ENCODE measurements at regions of chr7 and their contacts with region 1.

Region 1: DNA sequence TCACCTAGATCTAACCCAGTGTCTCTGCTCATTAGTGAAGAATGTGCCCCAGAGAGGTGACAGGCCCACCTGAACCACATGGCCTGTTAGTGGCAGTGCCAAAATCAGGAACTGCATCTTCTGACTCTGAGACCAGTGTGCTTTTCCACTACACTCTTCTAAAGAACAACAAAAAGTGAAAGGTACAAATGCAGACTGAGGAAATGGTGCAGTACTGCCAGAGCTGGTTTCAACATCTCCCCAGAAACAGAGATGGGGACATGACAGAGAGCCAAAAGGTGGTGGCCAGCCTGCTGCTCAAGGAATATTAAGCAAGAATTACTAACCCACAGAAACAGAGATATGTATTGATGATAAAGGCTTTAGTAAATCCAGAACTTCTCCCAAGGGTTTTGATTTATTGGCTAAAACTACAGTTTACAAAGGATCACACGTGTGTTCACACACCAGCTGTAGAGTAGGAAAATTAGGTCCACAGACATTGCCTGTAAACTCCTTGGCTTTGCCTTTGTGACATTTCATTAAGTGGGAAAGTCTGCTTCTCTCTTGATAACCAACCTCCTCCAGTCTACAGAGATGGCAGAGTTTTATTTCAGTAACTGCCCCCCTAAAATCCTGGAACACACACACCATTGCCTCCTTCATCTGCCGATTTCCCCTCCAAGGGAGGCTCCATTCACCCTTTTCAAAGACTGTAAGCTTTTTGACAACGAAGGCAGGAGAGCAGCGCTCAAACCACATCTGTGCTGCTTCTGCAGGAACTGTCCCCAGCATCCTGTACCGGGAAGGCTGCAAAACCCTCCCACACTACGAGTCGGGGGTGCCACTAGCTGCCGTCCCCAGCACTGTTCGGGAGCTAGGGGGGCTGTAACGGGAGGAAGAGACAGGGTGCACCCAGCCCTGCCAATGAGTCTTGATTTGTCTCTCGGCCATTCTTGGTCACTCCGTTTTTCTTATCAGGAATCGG is 29.8 kb downstream of the GSDME start:
- DNase-seq: no peak
- H3K4me3 Mint-ChIP-seq: peak overlapping the region; percentile 44
- H3K27ac Mint-ChIP-seq: peak overlapping the region; percentile 74
- H3K4me1 Mint-ChIP-seq: peaks cover 34% of the 10 kb centered on the region
- H3K27me3 Mint-ChIP-seq: peaks cover 11% of the 10 kb centered on the region

Region 2: DNA sequence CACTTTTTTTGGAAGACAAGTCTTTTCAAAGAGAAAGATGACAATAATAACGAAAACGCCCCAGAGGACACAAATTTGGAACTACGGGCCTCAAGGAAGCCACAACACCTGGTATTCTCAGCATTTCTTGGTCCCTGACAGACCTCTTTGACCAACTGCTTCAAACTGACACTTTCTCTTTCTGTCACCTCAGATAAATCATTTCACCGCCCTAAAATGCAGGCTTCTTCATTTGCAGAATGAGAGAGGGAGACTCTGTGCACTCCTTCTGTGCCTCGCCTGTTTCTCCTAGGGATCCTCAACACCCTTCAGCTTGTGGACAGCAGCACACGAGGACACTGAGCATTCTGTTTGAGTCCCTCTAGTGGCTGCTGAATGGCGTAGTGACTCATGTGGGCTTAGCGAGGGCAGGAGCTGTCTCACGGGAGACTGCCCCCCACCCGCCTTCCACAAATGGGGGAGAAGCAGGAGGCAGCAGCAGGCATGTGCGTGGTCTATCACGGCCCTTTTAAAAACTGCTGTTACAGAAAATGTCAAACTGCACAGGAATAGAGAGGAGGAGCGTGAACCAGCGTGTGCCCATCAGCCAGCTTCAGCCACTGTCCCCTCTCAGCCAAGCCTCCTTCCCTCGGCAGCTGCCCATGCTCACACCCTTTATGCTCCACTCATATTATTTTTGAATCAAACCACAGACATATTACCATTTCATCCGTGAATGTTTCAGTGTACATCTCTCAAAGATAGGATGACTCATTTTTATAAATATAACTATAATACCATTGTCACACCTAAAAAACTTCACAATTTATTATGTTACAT is 11.6 kb before region 1 on chr7:
- intact Hi-C with region 1: no loop called
- DNase-seq: no peak
- H3K4me3 Mint-ChIP-seq: no peak overlapping the region
- H3K27ac Mint-ChIP-seq: no peak overlapping the region
- H3K4me1 Mint-ChIP-seq: peaks cover 13% of the 10 kb centered on the region
- H3K27me3 Mint-ChIP-seq: peaks cover 2% of the 10 kb centered on the region

Region 3: GRCh38 chr7:24764972-24765744 is 37.7 kb after region 1 on chr7:
- intact Hi-C with region 1: loop called (anchors 5 kb)
- DNase-seq: no peak
- H3K4me3 Mint-ChIP-seq: no peak overlapping the region
- H3K27ac Mint-ChIP-seq: no peak overlapping the region
- H3K4me1 Mint-ChIP-seq: peaks cover 26% of the 10 kb centered on the region
- H3K27me3 Mint-ChIP-seq: peaks cover 26% of the 10 kb centered on the region